Activated CD8-positive, alpha-beta T cell treated with anti-CD3 and anti-CD28 coated beads, Interleukin-2, amount 10 ng/mL, durations not matched to agents 7 days and 5 days (primary cell): ENCODE measurements at regions of chr6 and their contacts with region 1.

Region 1: GRCh38 chr6:30483677-30484279 is 5.5 kb upstream of the HLA-E start:
- DNase-seq: peak; percentile 65
- ATAC-seq: no peak
- H3K4me3 Mint-ChIP-seq: no peak overlapping the region
- H3K27ac Mint-ChIP-seq: no peak overlapping the region
- H3K4me1 Mint-ChIP-seq: peaks cover 30% of the 10 kb centered on the region
- H3K27me3 Mint-ChIP-seq: peaks cover 40% of the 10 kb centered on the region

Region 2: DNA sequence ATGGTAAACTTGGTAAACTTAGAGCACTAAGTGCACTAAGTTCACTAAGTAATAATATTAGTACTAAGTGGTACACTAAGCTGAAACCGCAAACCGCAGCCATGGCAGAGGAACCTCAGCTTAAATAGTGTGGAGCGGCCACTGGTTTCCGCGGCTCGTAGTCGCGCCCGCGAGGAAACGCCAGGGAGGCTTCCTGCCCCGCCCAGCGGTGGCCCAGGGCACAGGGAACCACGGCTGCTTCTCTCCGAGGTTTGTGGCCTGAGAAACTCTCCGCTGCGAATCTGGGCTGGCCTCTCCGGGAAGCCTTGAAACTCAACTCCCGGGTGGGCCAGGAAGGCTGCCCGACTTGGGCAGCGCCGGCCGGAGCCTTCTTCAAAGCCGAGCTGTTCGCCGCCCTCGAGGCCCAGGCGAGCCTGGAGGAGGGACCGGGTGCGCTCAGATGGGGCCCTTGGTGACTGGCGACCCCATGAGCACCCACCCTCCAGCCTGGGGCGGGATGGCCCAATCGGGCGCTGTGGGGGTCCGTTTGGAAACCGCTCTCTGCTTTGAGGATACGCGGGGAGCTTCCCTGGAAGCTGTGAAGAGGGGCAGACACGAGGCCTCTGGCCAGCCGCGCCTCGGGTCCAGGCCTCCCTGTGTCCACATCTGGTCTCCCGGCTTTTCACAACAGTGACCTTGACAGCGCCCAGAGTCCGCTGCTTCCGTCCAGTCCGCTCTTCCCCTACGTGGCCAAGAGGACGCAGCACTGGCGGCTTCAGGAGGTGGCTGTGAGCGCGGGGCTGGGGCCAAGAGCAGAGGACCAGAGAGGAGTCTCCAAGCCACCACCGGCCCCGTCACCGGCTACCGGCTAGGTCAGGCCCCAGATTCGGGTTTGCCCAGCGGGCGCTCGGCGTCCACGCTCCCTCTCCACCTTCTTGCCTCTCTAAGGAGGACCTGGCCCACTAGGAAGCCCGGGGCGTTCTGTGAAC is 19.8 kb before region 1 on chr6:
- CTCF ChIA-PET with region 1: interaction called, 54 read pairs
- POLR2A ChIA-PET with region 1: no interaction called
- DNase-seq: peak; percentile 78
- ATAC-seq: peak; percentile 64
- H3K4me3 Mint-ChIP-seq: no peak overlapping the region
- H3K27ac Mint-ChIP-seq: no peak overlapping the region
- H3K4me1 Mint-ChIP-seq: peaks cover 29% of the 10 kb centered on the region
- H3K27me3 Mint-ChIP-seq: peaks cover 80% of the 10 kb centered on the region

Region 3: DNA sequence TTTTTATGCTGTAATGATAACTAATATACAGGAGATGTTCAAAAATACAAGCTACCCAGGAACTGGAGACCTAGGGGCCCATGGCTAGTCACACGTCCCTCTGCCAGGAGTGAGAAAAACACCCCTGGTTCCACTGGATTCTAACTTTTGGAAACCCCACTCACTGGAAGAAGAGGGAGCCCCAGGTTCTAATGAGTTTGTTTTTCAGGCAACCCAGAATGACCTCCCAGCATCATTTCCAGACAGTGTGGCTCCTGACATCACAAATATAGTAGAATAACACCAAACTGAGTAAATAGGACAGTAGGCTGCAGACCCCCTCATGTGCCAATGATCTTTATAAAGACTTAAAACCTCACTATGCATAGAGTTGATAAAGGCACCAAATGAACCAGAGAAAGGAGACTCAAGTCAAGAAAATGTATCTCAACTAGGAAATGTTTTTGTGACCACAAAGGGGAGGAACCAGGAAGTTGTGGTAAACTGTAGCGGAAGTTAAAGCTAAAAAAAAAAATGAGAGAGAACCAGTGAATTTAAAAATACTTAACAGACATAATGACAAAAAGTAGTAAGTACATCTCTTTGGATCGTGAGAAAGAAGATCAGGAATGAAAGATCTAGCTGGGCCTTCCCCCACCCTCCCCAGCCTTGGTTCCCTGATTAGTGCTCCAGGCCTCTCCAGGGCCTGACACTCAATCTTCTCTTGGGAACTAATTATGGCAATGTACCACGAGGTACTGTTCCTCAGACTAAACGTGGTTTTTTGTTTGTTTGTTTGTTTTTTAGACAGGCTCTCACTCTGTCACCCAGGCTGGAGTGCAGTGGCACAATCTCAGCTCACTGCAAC is 25.3 kb after region 1 on chr6:
- CTCF ChIA-PET with region 1: interaction called, 28 read pairs
- POLR2A ChIA-PET with region 1: no interaction called
- DNase-seq: peak; percentile 68
- ATAC-seq: peak; percentile 75
- H3K4me3 Mint-ChIP-seq: peak overlapping the region; percentile 69
- H3K27ac Mint-ChIP-seq: peak overlapping the region; percentile 89
- H3K4me1 Mint-ChIP-seq: peaks cover 61% of the 10 kb centered on the region
- H3K27me3 Mint-ChIP-seq: no peaks in the 10 kb centered on the region

Region 4: GRCh38 chr6:30571075-30571768 is 87.4 kb after region 1 on chr6 and contains the start of gene ABCF1:
- CTCF ChIA-PET with region 1: interaction called, 14 read pairs
- POLR2A ChIA-PET with region 1: interaction called, 3 read pairs
- DNase-seq: peak; percentile 99
- ATAC-seq: peak; percentile 96
- H3K4me3 Mint-ChIP-seq: peak within 1 kb of the TSS; percentile 96
- H3K27ac Mint-ChIP-seq: peak within 1 kb of the TSS; percentile 98
- H3K4me1 Mint-ChIP-seq: peaks cover 54% of the 10 kb centered on the region
- H3K27me3 Mint-ChIP-seq: peaks cover 2% of the 10 kb centered on the region
- total RNA-seq, gene ABCF1: 72.2 to 79.6 TPM

Region 5: DNA sequence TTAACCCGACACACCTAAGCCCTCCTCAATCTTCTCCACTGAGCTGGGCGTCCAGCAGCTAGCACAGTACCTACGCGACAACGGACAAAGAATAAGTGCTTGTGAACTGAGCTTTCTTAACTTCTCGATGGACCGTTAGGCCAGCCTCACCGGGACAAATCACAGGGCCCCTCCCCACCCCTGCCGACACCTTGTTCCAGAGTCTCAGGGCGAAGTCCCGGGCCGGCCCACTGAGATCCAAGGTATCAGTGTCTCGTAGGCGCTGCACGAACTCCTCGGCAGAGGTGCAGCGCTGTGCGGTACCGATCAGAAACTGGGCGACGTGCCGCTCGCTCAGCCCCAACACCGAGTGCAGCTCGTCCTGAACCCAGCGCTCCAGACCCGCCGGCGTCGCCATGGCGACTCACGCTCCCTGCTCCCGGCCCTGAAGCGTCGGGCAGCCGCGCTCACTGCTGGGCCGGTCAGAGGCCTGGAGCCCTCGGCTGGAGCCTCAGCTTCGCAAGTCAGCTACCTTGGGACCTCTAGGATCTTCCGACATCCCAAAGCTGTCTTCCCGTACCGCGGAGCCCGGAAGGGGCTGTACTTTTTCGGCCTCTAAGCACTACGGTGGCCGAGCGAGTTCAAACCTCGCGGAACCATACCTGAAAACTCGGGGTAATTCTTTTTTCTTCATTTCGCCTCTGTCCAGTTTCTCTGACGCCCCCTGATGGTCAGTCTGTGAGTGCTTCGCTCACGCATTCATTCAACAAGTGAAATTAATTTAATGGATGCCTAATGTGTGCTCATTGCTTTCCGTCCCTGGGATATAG is 188.9 kb after region 1 on chr6 and contains the start of gene DHX16:
- CTCF ChIA-PET with region 1: interaction called, 17 read pairs
- POLR2A ChIA-PET with region 1: interaction called, 3 read pairs
- DNase-seq: peak; percentile 95
- ATAC-seq: peak; percentile 86
- H3K4me3 Mint-ChIP-seq: peak within 1 kb of the TSS; percentile 93
- H3K27ac Mint-ChIP-seq: peak within 1 kb of the TSS; percentile 78
- H3K4me1 Mint-ChIP-seq: peaks cover 39% of the 10 kb centered on the region
- H3K27me3 Mint-ChIP-seq: no peaks in the 10 kb centered on the region
- total RNA-seq, gene DHX16: 38.5 to 41.0 TPM